ENCODE measurements at regions of chr7 and their contacts with region 1.

Region 1: GRCh38 chr7:130982160-130982638 is 248.2 kb upstream of the KLF14 start:
- H3K4me3 ChIP-seq: no peak overlapping the region
- H3K27ac ChIP-seq: no peak overlapping the region
- H3K4me1 ChIP-seq: no peaks in the 10 kb centered on the region
- CTCF ChIP-seq: no peak

Region 2: GRCh38 chr7:130904031-130904757 is 78.0 kb before region 1 on chr7:
- CTCF ChIA-PET with region 1: interaction called, 25 read pairs
- POLR2A ChIA-PET with region 1: interaction called, 4 read pairs
- H3K4me3 ChIP-seq: no peak overlapping the region
- H3K27ac ChIP-seq: no peak overlapping the region
- H3K4me1 ChIP-seq: peaks cover 17% of the 10 kb centered on the region
- CTCF ChIP-seq: no peak

Region 3: GRCh38 chr7:130961128-130961601 is 21.0 kb before region 1 on chr7:
- CTCF ChIA-PET with region 1: interaction called, 18 read pairs
- POLR2A ChIA-PET with region 1: no interaction called
- H3K4me3 ChIP-seq: no peak overlapping the region
- H3K27ac ChIP-seq: no peak overlapping the region
- H3K4me1 ChIP-seq: no peaks in the 10 kb centered on the region
- CTCF ChIP-seq: no peak

Region 4: DNA sequence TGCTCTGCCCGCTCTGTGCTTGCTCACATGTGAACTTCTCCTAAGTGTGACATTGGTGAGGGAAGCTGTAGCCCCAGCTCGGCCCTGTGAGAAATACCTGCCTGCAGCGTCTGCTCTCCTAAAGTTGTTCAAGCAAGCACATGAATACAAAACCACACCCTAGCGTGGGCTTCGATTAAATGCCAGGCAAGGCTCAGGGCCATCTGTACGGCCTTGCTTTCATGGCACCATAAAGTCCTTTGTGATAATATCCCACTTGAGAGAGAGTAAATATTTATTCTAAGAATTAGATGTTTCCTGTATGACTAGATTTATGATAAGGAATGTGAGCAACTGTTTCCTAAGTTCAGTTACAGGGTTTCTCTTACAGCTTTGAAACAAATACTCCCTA is 14.6 kb after region 1 on chr7:
- CTCF ChIA-PET with region 1: interaction called, 37 read pairs
- POLR2A ChIA-PET with region 1: no interaction called
- H3K4me3 ChIP-seq: no peak overlapping the region
- H3K27ac ChIP-seq: peak overlapping the region; percentile 27; the same call in 1 of the 2 replicates
- H3K4me1 ChIP-seq: peaks cover 17% of the 10 kb centered on the region
- CTCF ChIP-seq: no peak

Region 5: DNA sequence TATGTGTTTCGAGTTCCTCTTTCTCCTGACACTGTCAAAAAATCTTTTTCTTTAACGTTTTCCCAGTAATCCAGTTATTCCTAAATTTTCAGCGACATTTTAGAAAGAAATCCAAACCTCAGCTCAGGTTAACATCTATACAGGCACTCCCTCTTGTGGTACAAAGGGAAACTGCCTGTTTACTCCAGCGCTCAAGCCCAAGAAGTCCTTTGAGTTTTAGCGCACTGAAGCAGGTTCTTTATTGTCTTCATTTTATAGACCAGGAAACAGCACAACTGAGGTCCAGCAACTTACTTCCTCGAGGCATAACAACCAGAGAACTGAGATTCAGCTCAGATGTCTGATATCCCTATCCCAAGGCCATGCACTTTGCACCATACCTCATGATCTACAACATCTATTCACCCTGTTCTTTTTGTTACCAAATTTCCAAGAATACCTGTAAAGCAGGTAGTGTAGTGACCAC is 58.3 kb after region 1 on chr7:
- CTCF ChIA-PET with region 1: interaction called, 59 read pairs
- POLR2A ChIA-PET with region 1: no interaction called
- H3K4me3 ChIP-seq: no peak overlapping the region
- H3K27ac ChIP-seq: no peak overlapping the region
- H3K4me1 ChIP-seq: peaks cover 3% of the 10 kb centered on the region; the same call in 1 of the 2 replicates
- CTCF ChIP-seq: peak; percentile 71; the same call in 1 of the 2 replicates